GM13976 (cell line): ENCODE measurements at regions of chr22 and their contacts with region 1.

Region 1: GRCh38 chr22:17754233-17754925 is 19.9 kb downstream of the BID start:
- DNase-seq: no peak
- CTCF ChIP-seq: peak; percentile 52

Region 2: DNA sequence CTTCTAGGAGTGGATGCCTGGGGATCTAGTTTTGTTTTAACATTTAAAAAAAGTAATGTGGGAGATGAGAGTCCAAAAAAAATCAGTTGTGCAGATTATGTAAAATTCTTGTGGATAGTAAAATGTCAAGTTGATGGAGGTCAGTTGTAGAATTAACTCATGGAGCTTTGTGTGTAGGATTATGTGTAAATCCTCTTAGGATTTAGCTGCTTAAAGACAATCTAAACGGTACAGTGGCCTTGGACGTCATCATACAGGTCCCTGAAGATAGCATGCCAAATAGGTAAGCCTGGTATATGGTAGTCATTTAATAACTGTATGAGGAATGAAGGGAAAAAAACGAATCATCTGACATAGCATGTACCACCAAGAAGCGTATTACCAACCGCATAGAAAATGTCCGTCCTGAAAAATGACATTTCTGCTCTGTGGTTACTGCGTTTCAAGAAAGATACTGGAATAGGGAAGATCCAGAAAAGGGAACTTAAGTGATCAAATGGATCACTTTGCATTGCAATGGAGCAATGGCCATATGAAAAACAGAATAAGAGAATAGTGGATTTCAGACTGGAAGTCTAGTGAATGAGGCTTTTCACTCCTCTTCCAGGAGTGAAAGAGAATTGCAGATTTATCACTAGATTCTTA is 54.6 kb before region 1 on chr22:
- in situ Hi-C with region 1: loop called (anchors 10 kb)
- DNase-seq: no peak
- CTCF ChIP-seq: no peak